ENCODE measurements at regions of chr12 and their contacts with region 1.

Region 1: DNA sequence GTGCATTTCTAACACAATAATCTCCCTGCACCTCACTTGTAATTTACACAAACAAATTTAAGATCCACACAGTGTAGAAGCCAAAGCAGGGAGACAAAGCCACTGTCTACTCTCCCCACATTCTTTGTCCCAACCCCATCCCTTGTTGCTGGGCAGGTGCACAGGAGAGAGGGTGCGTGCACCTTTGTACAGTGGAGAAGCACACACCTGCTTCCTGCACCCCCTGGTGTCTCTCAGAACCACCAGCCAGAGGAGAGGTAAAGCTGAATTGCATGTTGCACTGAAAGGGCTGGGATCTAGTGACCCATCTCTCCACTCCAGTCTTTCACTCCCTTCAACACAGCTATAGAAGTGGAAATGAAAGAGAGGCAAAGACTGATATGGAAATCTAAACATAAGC is 51.4 kb upstream of the IFNG-AS1 start:
- DNase-seq: no peak
- ATAC-seq: no peak
- H3K4me3 ChIP-seq: no peak overlapping the region
- H3K27ac ChIP-seq: no peak overlapping the region
- H3K4me1 ChIP-seq: peaks cover 0 to 21% (median 3%) of the 10 kb centered on the region in 12 donors
- H3K27me3 ChIP-seq: no peaks in the 10 kb centered on the region
- CTCF ChIP-seq: no peak
- POLR2A ChIP-seq: no peak

Region 2: GRCh38 chr12:67742461-67742860 is 195.4 kb before region 1 on chr12:
- intact Hi-C with region 1: no loop called
- DNase-seq: no peak
- ATAC-seq: no peak
- H3K4me3 ChIP-seq: no peak overlapping the region
- H3K27ac ChIP-seq: no peak overlapping the region
- H3K4me1 ChIP-seq: no peaks in the 10 kb centered on the region
- H3K27me3 ChIP-seq: no peaks in the 10 kb centered on the region
- CTCF ChIP-seq: no peak
- POLR2A ChIP-seq: no peak

Region 3: GRCh38 chr12:67797185-67797741 is 140.6 kb before region 1 on chr12:
- intact Hi-C with region 1: loop called in 4 of 10 experiments (anchors 10 kb)
- DNase-seq: peak in 4 of 5 donors; percentile 21 to 53 (median 30)
- ATAC-seq: peak; percentile 74 to 86 (median 80)
- H3K4me3 ChIP-seq: peak overlapping the region in 2 of 12 donors; percentile 10 to 22
- H3K27ac ChIP-seq: peak overlapping the region; percentile 7 to 82 (median 38)
- H3K4me1 ChIP-seq: peaks cover 0 to 36% (median 19%) of the 10 kb centered on the region in 12 donors
- H3K27me3 ChIP-seq: no peaks in the 10 kb centered on the region
- CTCF ChIP-seq: no peak
- POLR2A ChIP-seq: no peak

Region 4: GRCh38 chr12:67827820-67828383 is 109.9 kb before region 1 on chr12:
- intact Hi-C with region 1: loop called in 1 of 10 experiments (anchors 10 kb)
- DNase-seq: peak in 3 of 5 donors; percentile 29 to 64 (median 31)
- ATAC-seq: peak; percentile 79 to 96 (median 93)
- H3K4me3 ChIP-seq: peak overlapping the region in 9 of 12 donors; percentile 26 to 57 (median 41)
- H3K27ac ChIP-seq: peak overlapping the region; percentile 7 to 87 (median 82)
- H3K4me1 ChIP-seq: peaks cover 0 to 31% (median 14%) of the 10 kb centered on the region in 12 donors
- H3K27me3 ChIP-seq: no peaks in the 10 kb centered on the region
- CTCF ChIP-seq: no peak
- POLR2A ChIP-seq: no peak

Region 5: DNA sequence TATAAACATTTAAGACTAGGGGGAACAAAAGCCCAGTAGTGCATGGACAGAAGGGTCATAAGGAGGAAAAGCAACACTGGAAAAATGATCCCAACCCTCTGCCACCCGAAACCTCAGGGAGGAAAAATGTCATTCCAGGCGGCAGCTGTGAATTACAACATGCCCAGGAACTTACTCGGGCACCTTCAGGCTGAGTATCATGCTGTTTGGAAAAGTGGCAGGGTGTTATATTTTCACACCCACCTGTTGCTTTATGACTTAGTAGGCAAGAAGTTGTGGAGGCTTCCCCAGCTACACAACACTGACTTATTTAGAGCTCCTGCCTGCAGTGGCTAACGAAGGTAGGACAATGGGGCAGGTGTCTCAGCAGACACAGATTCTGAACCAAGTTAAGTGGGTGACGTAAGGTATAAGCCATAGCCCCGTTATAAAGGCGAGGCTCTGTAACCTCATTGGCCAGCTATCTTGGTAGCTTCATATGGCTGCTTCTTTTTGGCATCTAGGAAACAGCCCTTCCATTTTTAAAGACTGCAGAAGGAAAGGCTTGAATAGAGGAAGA is 44.7 kb before region 1 on chr12:
- intact Hi-C with region 1: no loop called
- DNase-seq: no peak
- ATAC-seq: no peak
- H3K4me3 ChIP-seq: no peak overlapping the region
- H3K27ac ChIP-seq: no peak overlapping the region
- H3K4me1 ChIP-seq: peaks cover 0 to 12% (median 0%) of the 10 kb centered on the region in 12 donors
- H3K27me3 ChIP-seq: no peaks in the 10 kb centered on the region
- CTCF ChIP-seq: no peak
- POLR2A ChIP-seq: no peak

Region 6: DNA sequence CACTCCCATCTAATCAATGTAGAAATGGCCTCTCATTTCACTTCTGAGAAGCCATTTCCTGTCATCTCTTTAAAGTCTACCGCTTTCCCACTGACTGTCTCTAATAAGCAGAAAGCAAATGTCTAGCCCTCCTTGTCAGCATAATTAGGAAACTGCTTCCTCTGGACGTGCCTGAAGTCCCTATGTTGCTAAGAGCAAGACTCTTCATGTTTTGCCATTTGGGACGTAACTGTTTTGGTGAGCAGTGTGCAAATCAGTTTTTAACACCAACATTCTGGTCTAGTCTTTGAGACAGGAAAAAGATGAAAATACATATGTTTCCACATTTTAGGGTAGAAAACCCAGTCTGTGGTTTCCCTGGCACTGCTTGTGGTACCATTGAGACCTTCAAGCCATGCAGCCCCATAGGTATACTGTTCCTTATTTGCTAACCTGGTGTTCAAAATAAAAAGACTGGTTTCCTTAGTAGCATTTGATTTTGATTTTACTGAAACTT is 199.5 kb after region 1 on chr12:
- intact Hi-C with region 1: no loop called
- DNase-seq: no peak
- ATAC-seq: no peak
- H3K4me3 ChIP-seq: no peak overlapping the region
- H3K27ac ChIP-seq: no peak overlapping the region
- H3K4me1 ChIP-seq: no peaks in the 10 kb centered on the region
- H3K27me3 ChIP-seq: no peaks in the 10 kb centered on the region
- CTCF ChIP-seq: no peak
- POLR2A ChIP-seq: no peak

Region 7: DNA sequence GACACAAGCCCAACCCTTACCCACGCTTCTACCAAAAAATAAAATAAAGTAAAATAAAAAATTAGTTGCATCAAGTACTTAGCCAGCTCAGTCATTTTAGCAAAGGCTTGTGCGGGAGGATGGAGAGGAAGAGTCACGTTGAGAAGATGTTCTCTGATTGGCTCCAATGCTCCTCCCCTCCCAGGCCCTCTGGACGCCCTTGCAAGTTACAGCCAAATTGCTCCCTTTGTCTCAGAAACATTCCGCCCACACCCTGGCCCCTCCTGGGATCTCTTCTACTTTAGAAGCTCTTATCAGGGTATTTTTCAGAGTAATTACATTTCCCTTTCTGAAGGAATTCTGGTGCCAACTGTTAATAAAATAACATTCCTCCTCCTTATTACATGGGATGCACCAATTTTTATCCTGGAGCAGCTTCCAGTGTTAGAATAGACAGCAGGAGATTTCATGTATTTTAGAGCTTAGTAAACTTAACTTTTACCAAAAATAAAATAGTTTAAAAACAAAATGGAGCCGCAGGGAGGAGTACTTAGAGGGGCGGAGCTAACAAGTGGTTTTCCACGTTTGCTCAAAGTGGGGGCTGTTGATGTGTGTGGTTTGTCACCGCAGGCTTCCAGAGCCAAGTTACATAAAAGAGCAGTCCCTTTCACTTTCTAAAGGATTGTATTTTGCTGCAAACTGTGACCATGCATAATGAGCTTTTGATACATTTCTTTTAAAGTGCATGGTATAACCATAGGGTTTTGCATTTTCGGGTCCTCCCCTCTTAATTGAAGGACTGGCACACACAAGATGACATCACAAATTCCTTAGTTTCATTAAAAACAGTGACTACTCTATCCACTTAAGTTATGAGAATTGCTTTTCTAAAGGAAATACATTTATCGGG is 601.1 kb after region 1 on chr12:
- intact Hi-C with region 1: no loop called
- DNase-seq: peak; percentile 76 to 83 (median 81)
- ATAC-seq: peak; percentile 89 to 97 (median 94)
- H3K4me3 ChIP-seq: peak overlapping the region in 9 of 12 donors; percentile 4 to 52 (median 40)
- H3K27ac ChIP-seq: peak overlapping the region; percentile 26 to 86 (median 76)
- H3K4me1 ChIP-seq: peaks cover 0 to 24% (median 9%) of the 10 kb centered on the region in 12 donors
- H3K27me3 ChIP-seq: no peaks in the 10 kb centered on the region
- CTCF ChIP-seq: no peak
- POLR2A ChIP-seq: no peak